ENCODE measurements at regions of chr19 and their contacts with region 1.

Region 1: DNA sequence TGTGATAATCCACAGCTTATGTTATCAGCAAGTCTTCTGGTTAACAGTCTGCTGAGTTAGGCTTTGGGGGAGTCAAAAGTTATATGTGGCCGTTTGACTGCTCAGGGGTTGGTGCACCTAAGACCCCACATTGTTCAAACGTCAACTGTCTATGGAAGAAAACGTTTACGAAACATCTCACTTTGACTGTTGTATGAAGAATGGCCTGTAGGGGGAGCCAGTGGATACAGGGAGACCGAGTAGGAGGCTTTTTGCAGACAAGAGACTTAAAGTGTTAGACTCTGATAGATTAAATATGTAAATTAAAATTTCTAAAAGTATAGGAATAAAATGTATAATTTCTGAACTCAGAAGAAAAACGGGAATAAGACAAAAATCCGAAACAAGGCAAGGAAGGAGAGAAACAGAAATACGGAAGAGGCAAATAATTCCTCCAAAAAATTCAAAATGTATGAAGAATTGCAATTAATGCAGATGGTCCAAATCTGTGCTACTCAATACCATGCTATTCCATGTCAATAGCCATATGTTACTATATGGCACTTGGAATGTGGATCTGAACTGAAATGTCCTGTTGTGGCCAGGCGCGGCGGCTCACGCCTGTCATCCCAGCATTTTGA is 37.8 kb downstream of the TNFSF14 start:
- DNase-seq: peak; percentile 65 to 93
- ATAC-seq: peak; percentile 92 to 98 (median 95)
- H3K4me3 ChIP-seq: no peak overlapping the region
- H3K4me3 Mint-ChIP-seq: peak overlapping the region; percentile 4
- H3K27ac ChIP-seq: no peak overlapping the region
- H3K27ac Mint-ChIP-seq: peak overlapping the region in 1 of 2 donors; percentile 66
- H3K4me1 ChIP-seq: peaks cover 16% of the 10 kb centered on the region
- H3K4me1 Mint-ChIP-seq: peaks cover 11 to 20% of the 10 kb centered on the region in 2 donors
- H3K27me3 ChIP-seq: no peaks in the 10 kb centered on the region
- H3K27me3 Mint-ChIP-seq: peaks cover 0 to 7% of the 10 kb centered on the region in 2 donors
- CTCF ChIP-seq: peak; percentile 81

Region 2: DNA sequence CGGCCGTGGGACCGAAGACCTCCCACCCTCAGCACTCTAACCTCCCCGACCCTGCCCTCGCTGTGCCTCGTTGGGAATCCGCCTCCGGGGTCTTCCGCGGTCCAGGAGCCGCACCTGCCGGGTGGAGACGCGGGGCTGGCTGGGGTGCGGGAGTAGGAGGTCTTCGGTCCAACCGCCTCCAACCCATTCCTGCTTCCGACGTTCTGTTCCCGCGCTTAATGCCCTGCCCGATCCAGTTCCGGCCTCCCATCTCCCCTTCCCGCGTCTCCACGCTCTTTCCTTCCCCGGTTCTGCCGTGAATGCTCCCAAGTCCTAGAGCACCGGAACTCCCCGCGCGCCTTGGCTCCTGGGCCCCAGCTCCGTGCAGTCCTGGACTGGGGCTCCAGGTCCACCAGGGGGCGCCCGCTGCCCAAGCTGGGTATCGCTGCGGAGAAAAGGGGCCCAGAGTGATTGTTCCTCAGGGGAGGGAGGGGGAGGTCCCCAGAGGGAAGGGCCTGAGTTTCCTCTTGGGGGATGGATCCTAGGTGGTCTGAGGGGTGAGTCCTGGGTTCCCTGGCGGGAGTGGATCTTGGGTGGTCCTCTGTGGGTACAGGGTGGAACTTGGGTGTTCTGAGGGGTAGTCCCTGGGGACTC is 115.3 kb before region 1 on chr19:
- intact Hi-C with region 1: loop called (anchors 1 kb)
- DNase-seq: peak; percentile 93 to 94
- ATAC-seq: peak; percentile 84 to 89 (median 86)
- H3K4me3 ChIP-seq: peak overlapping the region; percentile 89
- H3K4me3 Mint-ChIP-seq: peak overlapping the region; percentile 95
- H3K27ac ChIP-seq: no peak overlapping the region
- H3K27ac Mint-ChIP-seq: peak overlapping the region; percentile 67 to 97
- H3K4me1 ChIP-seq: peaks cover 36% of the 10 kb centered on the region
- H3K4me1 Mint-ChIP-seq: peaks cover 29 to 36% of the 10 kb centered on the region in 2 donors
- H3K27me3 ChIP-seq: no peaks in the 10 kb centered on the region
- H3K27me3 Mint-ChIP-seq: no peaks in the 10 kb centered on the region
- CTCF ChIP-seq: peak; percentile 92

Measured in natural killer cell (primary cell).